ENCODE measurements at regions of chr18 and their contacts with region 1.

Region 1: GRCh38 chr18:5284808-5285207 is 10.7 kb downstream of the ZBTB14 start:
- DNase-seq: no peak
- ATAC-seq: no peak
- H3K4me3 ChIP-seq: no peak overlapping the region
- H3K4me3 Mint-ChIP-seq: no peak overlapping the region
- H3K27ac ChIP-seq: no peak overlapping the region
- H3K27ac Mint-ChIP-seq: peak overlapping the region; percentile 49
- H3K4me1 ChIP-seq: peaks cover 7% of the 10 kb centered on the region
- H3K4me1 Mint-ChIP-seq: peaks cover 39% of the 10 kb centered on the region
- H3K27me3 ChIP-seq: no peaks in the 10 kb centered on the region
- H3K27me3 Mint-ChIP-seq: no peaks in the 10 kb centered on the region
- CTCF ChIP-seq: no peak

Region 2: DNA sequence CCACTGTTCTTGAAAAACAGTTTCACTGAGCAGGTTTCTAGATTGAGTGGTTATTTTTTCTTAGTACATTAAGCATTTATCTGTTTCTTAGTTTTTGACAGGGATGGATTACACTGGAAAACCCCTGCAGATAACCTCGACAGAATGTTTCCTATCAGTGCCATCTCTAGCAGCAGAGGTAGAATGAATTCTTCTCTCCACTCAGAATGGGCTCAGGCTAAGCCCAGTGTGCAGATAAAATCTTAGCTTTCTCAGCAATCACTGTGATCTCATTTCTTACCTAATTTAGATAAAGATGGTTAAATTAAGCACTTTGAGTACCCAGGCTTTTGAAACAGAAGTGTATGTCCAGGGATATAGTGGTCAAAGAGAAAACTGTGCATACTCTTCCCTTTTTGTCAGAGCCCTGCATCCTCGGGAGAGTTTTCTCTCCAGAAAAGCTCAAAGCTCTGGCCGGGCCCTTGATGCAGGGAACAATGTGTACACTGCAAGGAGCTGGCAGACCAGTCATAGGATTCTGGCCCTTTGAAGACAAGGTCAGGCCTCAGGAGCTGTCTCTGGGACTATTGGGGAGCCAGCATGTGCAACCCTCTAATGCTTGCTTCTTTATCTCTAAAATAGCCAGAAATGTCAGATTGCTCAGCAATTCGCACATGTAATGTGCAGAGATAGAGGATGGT is 77.2 kb before region 1 on chr18:
- CTCF ChIA-PET with region 1: no interaction called
- POLR2A ChIA-PET with region 1: no interaction called
- intact Hi-C with region 1: no loop called
- DNase-seq: no peak
- ATAC-seq: no peak
- H3K4me3 ChIP-seq: no peak overlapping the region
- H3K4me3 Mint-ChIP-seq: no peak overlapping the region
- H3K27ac ChIP-seq: no peak overlapping the region
- H3K27ac Mint-ChIP-seq: no peak overlapping the region
- H3K4me1 ChIP-seq: no peaks in the 10 kb centered on the region
- H3K4me1 Mint-ChIP-seq: peaks cover 11% of the 10 kb centered on the region
- H3K27me3 ChIP-seq: no peaks in the 10 kb centered on the region
- H3K27me3 Mint-ChIP-seq: peaks cover 2% of the 10 kb centered on the region
- CTCF ChIP-seq: no peak

Region 3: DNA sequence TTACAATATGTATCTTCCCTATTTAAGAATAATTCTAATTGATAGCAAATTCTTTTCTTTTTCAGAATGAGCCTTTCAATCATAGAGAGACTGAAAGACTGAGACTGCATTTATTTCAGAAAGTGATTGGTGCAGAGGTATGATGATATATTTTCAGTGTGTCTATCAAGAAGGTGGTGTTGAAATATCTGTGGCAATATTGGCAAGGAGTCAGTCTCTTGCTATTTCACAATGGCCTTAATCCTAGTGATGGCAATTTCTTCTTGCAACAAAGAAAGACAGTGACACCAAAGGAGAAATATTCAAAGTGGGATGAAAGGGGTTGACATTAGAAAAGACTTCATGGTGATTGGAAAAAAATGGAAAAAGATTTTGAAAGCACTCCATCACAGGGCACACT is 32.4 kb after region 1 on chr18:
- CTCF ChIA-PET with region 1: no interaction called
- POLR2A ChIA-PET with region 1: no interaction called
- intact Hi-C with region 1: loop called in 1 of 2 experiments (anchors 5 kb)
- DNase-seq: no peak
- ATAC-seq: no peak
- H3K4me3 ChIP-seq: no peak overlapping the region
- H3K4me3 Mint-ChIP-seq: no peak overlapping the region
- H3K27ac ChIP-seq: no peak overlapping the region
- H3K27ac Mint-ChIP-seq: no peak overlapping the region
- H3K4me1 ChIP-seq: no peaks in the 10 kb centered on the region
- H3K4me1 Mint-ChIP-seq: no peaks in the 10 kb centered on the region
- H3K27me3 ChIP-seq: no peaks in the 10 kb centered on the region
- H3K27me3 Mint-ChIP-seq: no peaks in the 10 kb centered on the region
- CTCF ChIP-seq: no peak

Measured in CD8-positive, alpha-beta T cell (primary cell).